ENCODE measurements at regions of chr7 and their contacts with region 1.

Region 1: GRCh38 chr7:141960687-141961422 is 12.7 kb downstream of the TAS2R38 start:
- DNase-seq: no peak
- ATAC-seq: no peak
- H3K4me3 ChIP-seq: no peak overlapping the region
- H3K4me3 Mint-ChIP-seq: no peak overlapping the region
- H3K27ac ChIP-seq: no peak overlapping the region
- H3K27ac Mint-ChIP-seq: no peak overlapping the region
- H3K4me1 ChIP-seq: no peaks in the 10 kb centered on the region
- H3K4me1 Mint-ChIP-seq: no peaks in the 10 kb centered on the region
- H3K27me3 ChIP-seq: peaks cover 0 to 3% of the 10 kb centered on the region in 2 experiments
- H3K27me3 Mint-ChIP-seq: no peaks in the 10 kb centered on the region

Region 2: GRCh38 chr7:141722529-141722928 is 238.3 kb before region 1 on chr7:
- CTCF ChIA-PET with region 1: no interaction called
- POLR2A ChIA-PET with region 1: no interaction called
- DNase-seq: no peak
- ATAC-seq: no peak
- H3K4me3 ChIP-seq: no peak overlapping the region
- H3K4me3 Mint-ChIP-seq: no peak overlapping the region
- H3K27ac ChIP-seq: no peak overlapping the region
- H3K27ac Mint-ChIP-seq: no peak overlapping the region
- H3K4me1 ChIP-seq: no peaks in the 10 kb centered on the region
- H3K4me1 Mint-ChIP-seq: no peaks in the 10 kb centered on the region
- H3K27me3 ChIP-seq: no peaks in the 10 kb centered on the region
- H3K27me3 Mint-ChIP-seq: no peaks in the 10 kb centered on the region

Region 3: DNA sequence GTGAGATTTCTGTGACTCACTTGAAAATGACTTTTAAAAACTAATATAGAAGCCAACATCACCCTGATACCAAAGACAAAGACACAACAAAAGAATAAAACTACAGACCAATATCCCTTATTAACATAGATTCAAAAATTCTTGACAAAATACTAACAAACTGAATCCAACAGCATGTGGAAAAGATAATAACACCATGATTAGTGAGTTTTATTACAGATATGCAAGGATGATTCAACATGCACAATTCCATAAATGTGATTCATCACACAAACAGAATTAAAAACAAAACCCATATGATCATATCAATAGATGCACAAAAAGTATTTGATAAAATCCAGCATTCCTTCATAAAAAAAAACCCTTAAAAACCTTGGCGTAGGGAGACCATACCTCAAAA is 41.3 kb after region 1 on chr7:
- CTCF ChIA-PET with region 1: no interaction called
- POLR2A ChIA-PET with region 1: no interaction called
- DNase-seq: no peak
- ATAC-seq: no peak
- H3K4me3 ChIP-seq: no peak overlapping the region
- H3K4me3 Mint-ChIP-seq: no peak overlapping the region
- H3K27ac ChIP-seq: no peak overlapping the region
- H3K27ac Mint-ChIP-seq: no peak overlapping the region
- H3K4me1 ChIP-seq: no peaks in the 10 kb centered on the region
- H3K4me1 Mint-ChIP-seq: no peaks in the 10 kb centered on the region
- H3K27me3 ChIP-seq: no peaks in the 10 kb centered on the region
- H3K27me3 Mint-ChIP-seq: peaks cover 8 to 15% of the 10 kb centered on the region in 2 donors

Region 4: DNA sequence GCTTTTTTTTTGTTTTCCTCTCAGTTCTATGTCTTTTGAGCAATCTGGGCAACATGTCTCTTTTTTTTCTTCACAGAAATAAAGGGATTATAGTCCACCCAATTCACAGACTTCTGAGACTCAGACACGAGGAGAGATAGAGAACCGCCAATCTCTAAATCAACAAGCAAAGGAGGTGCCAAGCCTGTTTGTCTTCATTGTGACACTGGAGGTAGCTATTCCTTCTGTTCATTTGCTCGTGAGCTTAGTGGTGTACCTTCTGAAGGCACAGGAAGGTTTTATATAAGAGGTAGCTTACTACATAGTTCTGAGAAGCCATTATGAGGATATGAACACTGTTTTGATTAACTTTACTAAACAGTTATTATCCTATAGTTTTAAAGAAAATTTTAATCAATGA is 900.1 kb after region 1 on chr7:
- CTCF ChIA-PET with region 1: no interaction called
- POLR2A ChIA-PET with region 1: interaction called in 1 of 2 experiments, 12 read pairs
- DNase-seq: no peak
- ATAC-seq: peak in 1 of 4 experiments; percentile 34
- H3K4me3 ChIP-seq: no peak overlapping the region
- H3K4me3 Mint-ChIP-seq: no peak overlapping the region
- H3K27ac ChIP-seq: no peak overlapping the region
- H3K27ac Mint-ChIP-seq: no peak overlapping the region
- H3K4me1 ChIP-seq: peaks cover 4 to 10% of the 10 kb centered on the region in 2 experiments
- H3K4me1 Mint-ChIP-seq: peaks cover 13 to 20% (median 18%) of the 10 kb centered on the region in 3 donors
- H3K27me3 ChIP-seq: no peaks in the 10 kb centered on the region
- H3K27me3 Mint-ChIP-seq: no peaks in the 10 kb centered on the region